ENCODE measurements at regions of chr18 and their contacts with region 1.

Region 1: DNA sequence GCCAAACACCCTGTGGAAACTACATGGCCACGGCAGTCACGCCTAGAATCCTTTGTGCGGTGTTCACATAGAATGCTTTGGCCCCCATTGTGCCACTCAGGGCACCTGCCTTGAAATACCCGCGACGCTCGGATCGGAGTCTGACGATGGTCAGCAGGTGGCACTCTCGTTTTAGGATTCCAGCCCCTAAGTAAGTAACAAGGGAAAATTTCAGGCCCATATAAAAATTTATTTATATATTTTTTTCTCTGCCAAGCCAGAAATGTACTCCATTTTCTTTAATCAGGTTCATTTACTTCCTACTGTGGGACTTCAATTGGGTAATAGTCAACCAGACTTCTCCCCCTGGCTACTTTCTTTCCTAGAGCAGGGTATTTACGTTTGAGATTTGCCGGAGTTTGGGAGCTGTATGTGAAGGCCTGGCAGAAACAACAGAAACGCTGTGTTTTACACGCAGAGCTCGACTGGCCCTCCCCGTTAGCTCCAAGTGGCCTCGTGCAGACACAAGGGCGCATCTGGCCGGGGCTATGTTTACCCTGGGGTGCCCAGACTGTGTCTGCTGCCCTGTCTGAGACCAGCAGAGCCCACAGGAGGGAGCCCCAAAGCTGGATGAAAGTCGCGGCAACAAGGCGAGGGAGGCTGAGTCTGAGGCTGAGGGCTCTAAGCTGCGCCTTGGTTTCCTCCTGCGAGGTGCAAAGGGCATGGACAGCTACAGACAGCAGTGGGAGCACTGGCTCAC is 41.6 kb downstream of the LRRC30 start:
- DNase-seq: peak; percentile 70
- ATAC-seq: peak; percentile 79
- H3K4me3 Mint-ChIP-seq: no peak overlapping the region
- H3K27ac Mint-ChIP-seq: no peak overlapping the region
- H3K4me1 Mint-ChIP-seq: 0 out of 2 replicates have a peak, but pooled peaks cover 3% of the 10 kb centered on the region
- H3K27me3 Mint-ChIP-seq: no peaks in the 10 kb centered on the region; the same call in 1 of the 2 replicates
- CTCF ChIP-seq: no peak

Region 2: DNA sequence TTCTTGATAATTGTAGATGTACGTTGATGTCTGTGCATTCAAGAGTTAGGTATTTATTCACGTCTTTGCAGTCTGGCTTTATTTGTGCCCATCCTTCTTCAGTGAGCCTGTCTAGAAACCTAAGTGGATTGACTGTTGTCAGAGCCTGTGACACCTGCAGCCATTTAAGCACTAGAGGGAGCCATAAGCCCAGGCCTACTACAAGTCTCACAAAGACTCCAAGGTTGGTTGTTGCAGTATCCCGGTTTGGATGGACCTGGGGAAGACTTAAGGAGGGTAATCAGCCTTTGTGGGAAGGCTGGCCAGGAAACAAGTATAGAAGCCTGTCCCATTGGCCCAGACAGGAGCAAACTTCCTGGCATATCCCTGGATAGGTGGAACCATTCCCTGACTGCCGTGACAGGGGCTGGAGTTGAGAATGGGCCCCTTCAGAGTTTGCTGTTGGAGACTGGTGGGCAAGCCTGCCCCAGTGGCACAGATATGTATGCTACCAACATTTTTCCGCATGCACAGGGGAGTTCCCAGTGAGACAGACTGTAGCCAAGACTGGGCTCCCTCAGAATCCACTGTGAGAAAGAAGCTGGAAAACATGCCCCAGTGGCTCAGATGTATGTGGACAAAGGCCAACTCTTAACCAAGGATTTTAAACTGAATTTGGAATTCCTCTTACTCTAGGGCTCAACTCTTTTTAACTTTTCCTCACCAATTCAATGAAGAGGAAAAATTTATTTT is 50.9 kb before region 1 on chr18:
- CTCF ChIA-PET with region 1: interaction called, 10 read pairs
- POLR2A ChIA-PET with region 1: no interaction called
- DNase-seq: peak; percentile 67
- ATAC-seq: peak; percentile 97
- H3K4me3 Mint-ChIP-seq: no peak overlapping the region
- H3K27ac Mint-ChIP-seq: no peak overlapping the region
- H3K4me1 Mint-ChIP-seq: peaks cover 7% of the 10 kb centered on the region; the same call in 1 of the 2 replicates
- H3K27me3 Mint-ChIP-seq: no peaks in the 10 kb centered on the region
- CTCF ChIP-seq: peak; percentile 50

Region 3: DNA sequence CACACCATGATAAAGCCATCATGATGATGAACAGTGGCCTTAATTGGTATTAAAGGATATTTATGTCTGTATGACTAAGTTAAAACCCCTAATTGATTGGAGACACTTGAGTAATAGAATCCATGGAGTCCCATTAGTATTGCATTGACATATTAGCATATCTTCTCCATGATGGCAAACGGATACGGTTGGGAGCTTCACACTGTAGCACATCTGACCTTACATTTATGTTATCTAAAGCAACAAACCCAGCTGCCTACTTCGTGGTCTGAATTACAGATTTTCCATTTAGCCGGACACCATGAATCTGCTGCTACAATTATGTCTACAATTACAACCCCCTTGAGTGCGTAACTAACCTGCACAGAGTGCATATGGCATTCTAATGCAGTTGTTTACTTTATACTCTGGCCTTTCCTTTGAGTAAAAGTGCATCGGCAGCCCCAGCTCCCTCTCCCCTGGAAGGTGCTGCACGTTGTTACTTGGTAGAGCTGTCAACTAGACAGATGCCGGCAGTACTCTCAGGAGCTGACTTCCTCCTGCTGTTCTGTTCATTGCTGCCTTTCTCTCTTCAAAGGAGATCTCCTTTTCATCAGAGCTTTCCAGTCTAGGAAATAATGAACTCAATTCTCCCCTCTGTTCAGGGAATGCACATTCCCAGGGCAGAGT is 50.5 kb after region 1 on chr18:
- CTCF ChIA-PET with region 1: interaction called, 10 read pairs
- POLR2A ChIA-PET with region 1: no interaction called
- DNase-seq: no peak
- ATAC-seq: no peak
- H3K4me3 Mint-ChIP-seq: no peak overlapping the region
- H3K27ac Mint-ChIP-seq: no peak overlapping the region
- H3K4me1 Mint-ChIP-seq: peaks cover 2% of the 10 kb centered on the region; the same call in 1 of the 2 replicates
- H3K27me3 Mint-ChIP-seq: no peaks in the 10 kb centered on the region
- CTCF ChIP-seq: no peak

Region 4: DNA sequence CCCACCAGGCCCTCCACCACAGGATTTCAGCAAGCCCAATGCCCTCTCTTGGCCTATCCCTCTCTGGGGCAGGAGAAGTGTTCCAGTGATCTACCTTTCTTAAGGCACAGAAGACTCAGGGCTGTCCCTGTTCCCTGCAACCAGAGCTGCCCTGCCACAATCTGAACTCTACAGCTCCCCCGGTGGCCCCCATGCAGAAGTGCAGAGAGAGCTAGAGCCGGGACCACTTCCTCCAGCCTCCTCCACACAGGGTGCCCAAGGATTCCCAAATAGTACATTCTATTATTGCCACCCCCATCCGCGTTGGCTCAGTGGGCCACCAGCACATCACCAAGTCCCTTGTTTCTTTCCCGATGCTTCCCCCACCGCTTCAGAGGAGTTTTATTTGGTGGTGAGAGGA is 179.9 kb after region 1 on chr18:
- CTCF ChIA-PET with region 1: interaction called, 14 read pairs
- POLR2A ChIA-PET with region 1: no interaction called
- DNase-seq: peak; percentile 61
- ATAC-seq: peak; percentile 100
- H3K4me3 Mint-ChIP-seq: no peak overlapping the region
- H3K27ac Mint-ChIP-seq: no peak overlapping the region
- H3K4me1 Mint-ChIP-seq: no peaks in the 10 kb centered on the region
- H3K27me3 Mint-ChIP-seq: no peaks in the 10 kb centered on the region; the same call in 1 of the 2 replicates
- CTCF ChIP-seq: peak; percentile 67

Region 5: GRCh38 chr18:7789856-7790552 is 517.5 kb after region 1 on chr18:
- CTCF ChIA-PET with region 1: interaction called, 14 read pairs
- POLR2A ChIA-PET with region 1: no interaction called
- DNase-seq: peak; percentile 27
- ATAC-seq: peak; percentile 92
- H3K4me3 Mint-ChIP-seq: peak overlapping the region; percentile 28
- H3K27ac Mint-ChIP-seq: peak overlapping the region; percentile 97
- H3K4me1 Mint-ChIP-seq: peaks cover 13% of the 10 kb centered on the region
- H3K27me3 Mint-ChIP-seq: no peaks in the 10 kb centered on the region
- CTCF ChIP-seq: peak; percentile 42

Measured in WTC11 (cell line).